ENCODE measurements at regions of chrX and their contacts with region 1.

Region 1: GRCh38 chrX:123201720-123202119 is 17.6 kb downstream of the GRIA3 start:
- DNase-seq: no peak
- H3K4me3 ChIP-seq: no peak overlapping the region
- H3K27ac ChIP-seq: no peak overlapping the region
- H3K4me1 ChIP-seq: no peaks in the 10 kb centered on the region
- H3K27me3 ChIP-seq: no peaks in the 10 kb centered on the region
- CTCF ChIP-seq: no peak
- EP300 ChIP-seq: no peak
- POLR2A ChIP-seq: no peak
- RAD21 ChIP-seq: no peak

Region 2: GRCh38 chrX:123190096-123190495 is 11.6 kb before region 1 on chrX:
- CTCF ChIA-PET with region 1: interaction called, 22 read pairs
- POLR2A ChIA-PET with region 1: interaction called, 3 read pairs
- DNase-seq: no peak
- H3K4me3 ChIP-seq: no peak overlapping the region
- H3K27ac ChIP-seq: no peak overlapping the region
- H3K4me1 ChIP-seq: peaks cover 0 to 2% (median 0%) of the 10 kb centered on the region in 4 experiments; a peak in 1 of 7 replicates
- H3K27me3 ChIP-seq: peaks cover 0 to 7% (median 5%) of the 10 kb centered on the region in 4 experiments; a peak in 3 of 7 replicates
- CTCF ChIP-seq: no peak
- EP300 ChIP-seq: no peak
- POLR2A ChIP-seq: no peak
- RAD21 ChIP-seq: no peak

Region 3: GRCh38 chrX:123219892-123220291 is 18.2 kb after region 1 on chrX:
- CTCF ChIA-PET with region 1: interaction called, 12 read pairs
- POLR2A ChIA-PET with region 1: no interaction called
- DNase-seq: no peak
- H3K4me3 ChIP-seq: no peak overlapping the region
- H3K27ac ChIP-seq: no peak overlapping the region
- H3K4me1 ChIP-seq: peaks cover 0 to 2% (median 0%) of the 10 kb centered on the region in 4 experiments; a peak in 1 of 7 replicates
- H3K27me3 ChIP-seq: no peaks in the 10 kb centered on the region
- CTCF ChIP-seq: no peak
- EP300 ChIP-seq: no peak
- POLR2A ChIP-seq: no peak
- RAD21 ChIP-seq: no peak

Measured in H1 (cell line).